ENCODE measurements at regions of chr21 and their contacts with region 1.

Region 1: DNA sequence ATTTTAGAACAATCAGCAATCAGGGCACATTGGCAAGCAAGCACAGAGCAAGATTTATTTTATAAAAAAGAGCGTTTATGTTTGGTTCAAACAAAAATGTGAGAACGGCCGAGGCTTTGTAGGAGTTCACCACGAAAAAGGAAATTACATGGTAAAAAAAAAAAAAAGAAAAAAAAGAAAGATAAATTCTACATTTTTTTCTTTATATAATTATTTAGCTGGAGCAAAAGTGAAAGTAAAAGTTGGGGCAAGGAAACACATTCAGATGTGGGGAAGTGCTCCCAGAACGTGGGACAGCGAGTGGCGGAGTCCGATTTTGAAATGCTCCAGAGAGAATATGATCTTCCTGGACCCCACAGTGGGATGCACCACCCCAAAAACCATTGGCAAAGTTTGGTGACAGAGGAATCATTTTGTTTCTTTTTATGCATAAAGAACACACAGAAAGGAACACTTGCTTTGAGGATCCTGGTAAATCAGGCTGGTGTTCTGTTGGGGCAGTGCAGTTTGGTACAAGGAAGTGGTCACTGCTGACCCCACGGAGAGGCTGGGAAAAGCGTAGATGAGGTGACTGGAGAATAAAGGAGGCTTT is 16.3 kb upstream of the ATP5PO start:
- DNase-seq: no peak
- H3K4me3 ChIP-seq: peak overlapping the region; percentile 32 to 62 (median 44)
- H3K27ac ChIP-seq: peak overlapping the region; percentile 68; the same call in 1 of the 2 replicates
- H3K4me1 ChIP-seq: peaks cover 0 to 8% (median 2%) of the 10 kb centered on the region in 4 experiments; a peak in 2 of 7 replicates
- H3K27me3 ChIP-seq: no peaks in the 10 kb centered on the region; a peak in 1 of 7 replicates
- CTCF ChIP-seq: no peak
- EP300 ChIP-seq: no peak
- POLR2A ChIP-seq: no peak
- RAD21 ChIP-seq: no peak

Region 2: DNA sequence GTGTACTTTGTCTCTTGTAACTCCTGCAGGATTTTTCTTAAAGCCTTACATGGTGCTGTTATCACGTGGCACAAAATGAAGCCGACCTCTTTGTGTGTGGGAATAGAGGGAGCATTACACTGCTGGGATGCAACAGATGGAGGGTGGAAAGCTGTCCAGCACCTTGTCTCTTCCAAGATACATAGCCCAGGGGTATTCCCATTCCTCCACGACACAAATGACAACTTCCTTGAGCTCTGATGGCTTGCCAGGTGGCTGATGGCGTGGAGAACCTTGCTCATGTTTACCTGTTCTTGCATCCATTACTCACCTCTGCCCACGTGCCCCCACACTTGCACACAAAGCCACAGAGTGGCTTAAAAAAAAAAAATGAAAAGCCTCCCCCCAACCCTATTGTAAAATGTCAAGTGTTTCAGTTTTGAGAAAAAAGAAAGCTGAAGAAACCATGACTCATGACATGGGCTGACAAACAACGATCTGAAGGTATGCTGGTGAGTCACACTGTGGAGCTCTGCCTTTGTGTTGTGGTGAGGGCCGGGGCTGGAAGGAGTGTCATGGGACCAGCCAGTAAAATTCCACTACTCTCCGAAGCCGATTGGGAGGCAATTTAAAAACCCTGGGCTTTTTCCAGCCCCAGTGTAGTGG is 15.7 kb after region 1 on chr21:
- CTCF ChIA-PET with region 1: no interaction called
- POLR2A ChIA-PET with region 1: interaction called, 14 read pairs
- DNase-seq: peak; percentile 46 to 53
- H3K4me3 ChIP-seq: peak overlapping the region in 2 of 4 experiments; percentile 8 to 48; a peak in 4 of 8 replicates
- H3K27ac ChIP-seq: peak overlapping the region; percentile 91
- H3K4me1 ChIP-seq: peaks cover 10 to 21% (median 15%) of the 10 kb centered on the region in 4 experiments; a peak in 6 of 7 replicates
- H3K27me3 ChIP-seq: no peaks in the 10 kb centered on the region
- CTCF ChIP-seq: no peak
- EP300 ChIP-seq: no peak
- POLR2A ChIP-seq: peak; percentile 22 to 24; a peak in 2 of 3 replicates
- RAD21 ChIP-seq: 0 out of 4 replicates have a peak, but pooled peaks of 1 of the 2 experiments have one; percentile 2

Region 3: DNA sequence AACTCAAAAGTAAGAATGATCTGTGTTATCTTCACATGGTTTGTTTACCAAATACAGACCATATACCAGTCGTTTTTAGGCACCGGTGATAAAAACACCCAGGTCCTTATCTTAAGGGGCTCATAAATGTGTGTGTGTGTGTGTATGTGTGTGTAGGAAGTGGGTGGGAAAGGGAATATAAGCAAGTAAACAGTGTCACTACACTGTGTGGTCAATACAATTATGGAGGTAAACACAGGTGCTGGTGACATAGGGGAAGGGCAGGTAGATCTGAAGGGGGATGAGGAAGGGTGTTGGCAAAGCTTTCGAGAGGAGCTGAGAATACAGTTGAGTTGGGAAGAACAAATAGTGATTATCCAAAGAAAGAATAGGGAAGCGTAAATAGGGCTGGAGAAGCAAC is 122.4 kb after region 1 on chr21:
- CTCF ChIA-PET with region 1: no interaction called
- POLR2A ChIA-PET with region 1: no interaction called
- DNase-seq: no peak
- H3K4me3 ChIP-seq: no peak overlapping the region
- H3K27ac ChIP-seq: no peak overlapping the region
- H3K4me1 ChIP-seq: no peaks in the 10 kb centered on the region
- H3K27me3 ChIP-seq: no peaks in the 10 kb centered on the region
- CTCF ChIP-seq: no peak
- EP300 ChIP-seq: no peak
- POLR2A ChIP-seq: no peak
- RAD21 ChIP-seq: no peak

Region 4: DNA sequence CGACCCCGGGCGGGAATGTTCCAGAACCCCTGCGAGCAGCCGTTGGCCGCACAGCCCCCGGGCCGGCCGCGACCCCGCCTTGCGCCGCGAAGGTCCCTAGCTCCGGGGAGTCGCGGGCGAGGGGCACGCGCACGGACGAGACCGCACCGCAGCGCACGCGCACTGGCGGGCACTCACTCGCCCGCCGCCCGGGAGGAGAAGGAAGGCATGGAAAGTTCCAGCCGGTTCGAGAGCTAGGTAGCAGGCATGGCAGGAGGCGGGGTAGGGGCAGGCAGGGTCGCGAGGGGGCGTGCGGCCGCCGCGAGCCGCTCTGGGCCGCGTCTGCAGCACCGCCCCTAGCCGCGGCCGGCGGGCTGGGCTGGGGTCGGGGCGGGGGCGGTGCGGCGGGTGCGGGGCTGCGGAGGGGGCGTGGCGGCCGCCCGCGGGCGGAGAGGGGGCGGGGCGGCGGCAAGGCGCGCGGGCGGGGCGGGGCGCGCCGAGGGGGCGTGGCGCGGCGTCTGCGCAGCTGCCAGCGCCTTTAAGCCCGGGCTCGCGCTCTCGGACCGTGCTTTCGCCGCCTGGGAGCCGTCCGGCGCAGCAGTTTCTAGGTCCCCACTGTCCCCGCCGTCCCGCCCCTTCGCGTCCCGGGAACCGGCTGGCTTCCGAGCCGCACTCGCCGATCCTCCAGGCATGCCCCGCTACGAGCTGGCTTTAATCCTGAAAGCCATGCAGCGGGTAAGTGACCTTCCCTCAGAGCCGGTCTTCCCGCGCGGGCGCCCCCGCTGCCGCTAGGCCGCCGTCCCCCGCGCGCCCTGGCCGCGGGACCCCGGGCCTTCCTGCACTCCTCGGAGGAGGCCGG is 141.4 kb after region 1 on chr21 and contains the starts of genes MRPS6 and SLC5A3:
- CTCF ChIA-PET with region 1: interaction called, 3 read pairs
- POLR2A ChIA-PET with region 1: interaction called, 16 read pairs
- DNase-seq: peak; percentile 67 to 91
- H3K4me3 ChIP-seq: peak within 1 kb of the TSS; percentile 67 to 92 (median 76)
- H3K27ac ChIP-seq: peak within 1 kb of the TSS; percentile 65; the same call in 1 of the 2 replicates
- H3K4me1 ChIP-seq: peaks cover 0 to 11% (median 3%) of the 10 kb centered on the region in 4 experiments; a peak in 6 of 7 replicates
- H3K27me3 ChIP-seq: no peaks in the 10 kb centered on the region; a peak in 2 of 7 replicates
- CTCF ChIP-seq: peak; percentile 37 to 63 (median 53)
- EP300 ChIP-seq: no peak
- POLR2A ChIP-seq: peak; percentile 90 to 95
- RAD21 ChIP-seq: peak; percentile 33 to 56
- total RNA-seq, gene MRPS6: 154 and 156 TPM in 2 replicates
- total RNA-seq, gene SLC5A3: 19.4 TPM in 2 replicates

Measured in H1 (cell line).